KBM-7 (cell line): ENCODE measurements at regions of chr2 and their contacts with region 1.

Region 1: GRCh38 chr2:72579591-72580180 is 246.1 kb downstream of the EXOC6B start:
- DNase-seq: peak; percentile 46

Region 2: GRCh38 chr2:71558300-71559051 is 1021.2 kb before region 1 on chr2:
- in situ Hi-C with region 1: loop called (anchors 25 kb)
- DNase-seq: no peak

Region 3: GRCh38 chr2:71933467-71934319 is 646.0 kb before region 1 on chr2:
- in situ Hi-C with region 1: loop called (anchors 25 kb)
- DNase-seq: no peak